Endothelial cell of umbilical vein (primary cell): ENCODE measurements at regions of chr4 and their contacts with region 1.

Region 1: DNA sequence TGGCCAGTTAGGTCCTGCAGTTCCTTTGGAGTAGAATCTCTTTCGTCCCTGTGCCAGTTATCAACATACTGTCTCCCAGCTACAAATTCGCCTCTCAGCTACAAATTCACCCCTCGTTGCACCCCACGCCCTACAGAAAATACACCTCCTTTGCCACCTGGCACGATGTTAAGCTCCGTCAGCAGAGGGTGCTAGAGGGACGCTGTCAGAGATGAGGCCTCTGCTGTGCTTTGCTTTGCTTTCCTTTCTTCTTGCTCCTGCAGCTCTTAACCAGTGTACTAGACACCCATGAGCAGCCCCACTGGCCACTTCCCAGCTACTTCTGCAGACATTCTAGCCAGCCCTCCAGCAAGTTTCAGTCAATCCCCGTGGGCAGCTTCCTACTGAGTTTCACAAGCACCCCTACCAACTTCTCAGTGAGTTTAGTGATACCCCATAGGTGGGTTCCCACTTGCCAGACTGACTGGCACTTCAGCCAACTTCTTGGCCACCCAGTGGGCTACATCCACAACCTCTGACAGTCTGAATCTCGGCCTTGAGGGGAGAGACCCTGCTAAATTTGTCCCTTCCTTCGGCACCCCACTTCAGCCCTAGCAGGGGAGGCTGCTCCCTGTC is 21.8 kb downstream of the HAUS3 start:
- DNase-seq: peak; percentile 66
- H3K4me3 ChIP-seq: no peak overlapping the region
- H3K27ac ChIP-seq: no peak overlapping the region
- H3K4me1 ChIP-seq: no peaks in the 10 kb centered on the region
- H3K27me3 ChIP-seq: no peaks in the 10 kb centered on the region
- CTCF ChIP-seq: peak; percentile 84 to 85
- POLR2A ChIP-seq: no peak

Region 2: DNA sequence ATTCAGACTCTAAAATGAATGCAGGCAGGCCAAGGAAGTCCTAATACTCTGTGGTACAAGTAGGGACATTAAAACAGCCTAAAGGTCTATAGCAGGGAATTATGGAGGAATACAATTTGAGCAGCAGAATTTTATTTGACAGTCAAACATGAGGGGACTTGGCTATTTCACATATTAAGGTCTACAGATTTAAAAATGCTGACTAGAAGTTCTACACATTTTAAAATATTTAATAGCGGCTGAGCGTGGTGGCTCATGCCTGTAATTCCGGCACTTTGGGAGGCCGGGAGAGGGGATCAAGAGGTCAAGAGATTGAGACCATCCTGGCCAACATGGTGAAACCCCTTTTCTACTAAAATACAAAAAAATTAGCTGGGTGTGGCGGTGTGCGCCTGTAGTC is 11.0 kb after region 1 on chr4:
- CTCF ChIA-PET with region 1: interaction called, 23 read pairs
- POLR2A ChIA-PET with region 1: no interaction called
- dilution Hi-C with region 1: no loop called
- intact Hi-C with region 1: no loop called
- DNase-seq: no peak
- H3K4me3 ChIP-seq: no peak overlapping the region
- H3K27ac ChIP-seq: no peak overlapping the region
- H3K4me1 ChIP-seq: no peaks in the 10 kb centered on the region
- H3K27me3 ChIP-seq: no peaks in the 10 kb centered on the region
- CTCF ChIP-seq: no peak
- POLR2A ChIP-seq: no peak

Region 3: DNA sequence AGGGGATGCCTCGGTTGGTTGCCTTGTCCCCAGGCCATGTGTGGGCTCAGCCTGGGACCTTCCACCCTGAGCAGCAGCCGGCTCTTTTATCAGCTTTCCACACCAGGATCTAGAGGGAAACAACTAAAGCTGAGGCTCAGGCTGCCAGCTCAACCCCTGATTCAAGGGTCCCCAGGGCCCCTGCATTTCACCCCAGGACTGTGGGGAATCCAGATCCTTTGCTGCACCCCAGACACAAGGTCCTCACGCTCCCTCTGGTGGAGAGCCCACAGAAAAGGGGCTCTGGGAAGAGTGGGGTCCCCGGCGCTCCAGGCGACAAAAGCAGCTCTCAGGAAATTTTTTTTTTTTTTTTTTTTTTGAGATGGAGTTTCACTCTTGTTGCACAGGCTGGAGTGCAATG is 134.0 kb after region 1 on chr4:
- CTCF ChIA-PET with region 1: interaction called, 13 read pairs
- POLR2A ChIA-PET with region 1: no interaction called
- dilution Hi-C with region 1: no loop called
- intact Hi-C with region 1: no loop called
- DNase-seq: no peak
- H3K4me3 ChIP-seq: no peak overlapping the region
- H3K27ac ChIP-seq: no peak overlapping the region
- H3K4me1 ChIP-seq: no peaks in the 10 kb centered on the region
- H3K27me3 ChIP-seq: no peaks in the 10 kb centered on the region
- CTCF ChIP-seq: no peak
- POLR2A ChIP-seq: no peak

Region 4: DNA sequence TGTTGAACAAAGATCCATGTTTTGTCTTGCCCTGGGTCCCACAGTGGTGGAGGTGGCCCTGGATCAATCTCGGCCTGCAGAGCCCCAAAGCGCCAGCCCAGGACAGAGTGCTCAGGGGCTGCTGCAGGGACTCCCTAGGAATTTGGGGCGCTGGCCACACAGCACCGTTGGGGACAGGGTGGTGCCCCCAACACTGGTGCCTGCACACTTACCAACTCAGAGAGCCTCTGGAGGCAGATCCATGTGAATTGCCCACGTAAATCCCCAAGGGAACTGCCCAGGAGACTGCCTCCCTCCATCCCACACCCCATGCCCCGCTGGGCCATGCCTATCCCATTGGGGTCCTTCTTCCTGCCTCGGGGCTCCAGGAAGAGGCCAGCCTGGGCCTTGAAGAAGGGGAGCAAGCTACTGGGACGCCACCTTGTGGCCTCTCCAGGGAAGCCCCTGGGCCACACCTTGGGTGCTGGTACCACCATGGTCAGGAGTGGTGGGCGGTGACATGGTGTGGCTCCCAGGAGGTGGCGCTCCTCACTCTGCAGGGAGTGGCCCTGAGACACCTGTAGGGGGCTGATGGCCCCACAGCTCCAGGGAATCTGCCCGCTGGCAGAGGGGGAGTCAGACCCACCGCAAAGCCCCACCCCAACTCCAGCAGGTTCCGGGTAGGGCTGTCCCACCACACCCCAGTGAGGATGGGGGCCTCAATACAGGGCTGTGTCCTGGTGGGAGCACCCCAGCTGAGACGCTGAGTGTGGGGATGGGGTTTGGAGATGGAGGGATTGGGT is 221.5 kb after region 1 on chr4:
- CTCF ChIA-PET with region 1: interaction called, 149 read pairs
- POLR2A ChIA-PET with region 1: no interaction called
- dilution Hi-C with region 1: no loop called
- intact Hi-C with region 1: loop called (anchors 1 kb)
- DNase-seq: peak; percentile 78
- H3K4me3 ChIP-seq: no peak overlapping the region
- H3K27ac ChIP-seq: no peak overlapping the region
- H3K4me1 ChIP-seq: no peaks in the 10 kb centered on the region
- H3K27me3 ChIP-seq: no peaks in the 10 kb centered on the region
- CTCF ChIP-seq: peak; percentile 91 to 92
- POLR2A ChIP-seq: no peak

Region 5: DNA sequence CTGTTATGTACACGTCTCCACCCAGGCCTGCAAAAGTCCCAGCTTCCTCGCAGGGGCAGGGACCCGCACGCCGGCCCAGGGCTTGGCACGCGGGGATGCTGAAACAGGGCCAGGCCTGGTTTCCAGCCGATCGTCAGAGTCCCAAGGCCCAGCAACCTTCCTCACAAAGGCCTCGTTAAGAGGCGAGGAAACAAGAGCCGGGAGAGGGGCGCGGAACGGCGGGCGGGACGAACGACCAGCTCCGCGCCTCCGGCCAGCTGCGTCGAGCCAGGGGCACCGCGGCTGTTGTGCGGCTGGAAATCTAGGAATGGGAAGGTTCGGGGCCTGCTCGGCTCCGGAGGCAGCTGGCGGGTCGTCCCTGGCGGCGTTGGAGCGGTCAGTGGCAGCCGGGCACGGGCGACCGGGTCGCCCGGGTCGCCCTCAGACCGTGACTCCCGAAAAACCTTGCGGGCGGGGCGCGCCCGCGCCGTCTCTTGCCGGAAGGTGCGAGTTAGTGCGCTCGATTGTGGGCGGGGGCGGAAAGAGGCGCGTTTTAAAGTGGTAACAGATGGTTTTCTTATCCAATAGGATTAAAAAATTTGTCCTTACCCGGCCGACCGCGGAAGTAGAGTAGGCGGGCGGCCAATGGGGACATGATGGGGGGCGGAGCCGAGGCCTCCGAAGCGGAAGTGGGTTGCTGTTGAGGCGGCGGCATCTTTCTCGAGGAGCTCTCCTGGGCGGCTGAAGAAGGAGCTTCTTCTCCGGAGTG is 248.5 kb after region 1 on chr4 and contains the start of gene RNF4:
- CTCF ChIA-PET with region 1: interaction called, 30 read pairs
- POLR2A ChIA-PET with region 1: no interaction called
- dilution Hi-C with region 1: no loop called
- intact Hi-C with region 1: no loop called
- DNase-seq: peak; percentile 97
- H3K4me3 ChIP-seq: peak within 1 kb of the TSS; percentile 92 to 98 (median 95)
- H3K27ac ChIP-seq: peak within 1 kb of the TSS; percentile 69
- H3K4me1 ChIP-seq: peaks cover 14% of the 10 kb centered on the region
- H3K27me3 ChIP-seq: no peaks in the 10 kb centered on the region
- CTCF ChIP-seq: no peak
- POLR2A ChIP-seq: peak; percentile 86
- total RNA-seq, gene RNF4: 67.5 and 71.4 TPM in 2 replicates

Region 6: GRCh38 chr4:3436798-3437581 is 1216.9 kb after region 1 on chr4:
- CTCF ChIA-PET with region 1: no interaction called
- POLR2A ChIA-PET with region 1: no interaction called
- dilution Hi-C with region 1: no loop called
- intact Hi-C with region 1: no loop called
- DNase-seq: peak; percentile 46
- H3K4me3 ChIP-seq: no peak overlapping the region
- H3K27ac ChIP-seq: peak overlapping the region; percentile 48
- H3K4me1 ChIP-seq: peaks cover 7% of the 10 kb centered on the region
- H3K27me3 ChIP-seq: no peaks in the 10 kb centered on the region
- CTCF ChIP-seq: no peak
- POLR2A ChIP-seq: no peak